ENCODE measurements at regions of chr10 and their contacts with region 1.

Region 1: DNA sequence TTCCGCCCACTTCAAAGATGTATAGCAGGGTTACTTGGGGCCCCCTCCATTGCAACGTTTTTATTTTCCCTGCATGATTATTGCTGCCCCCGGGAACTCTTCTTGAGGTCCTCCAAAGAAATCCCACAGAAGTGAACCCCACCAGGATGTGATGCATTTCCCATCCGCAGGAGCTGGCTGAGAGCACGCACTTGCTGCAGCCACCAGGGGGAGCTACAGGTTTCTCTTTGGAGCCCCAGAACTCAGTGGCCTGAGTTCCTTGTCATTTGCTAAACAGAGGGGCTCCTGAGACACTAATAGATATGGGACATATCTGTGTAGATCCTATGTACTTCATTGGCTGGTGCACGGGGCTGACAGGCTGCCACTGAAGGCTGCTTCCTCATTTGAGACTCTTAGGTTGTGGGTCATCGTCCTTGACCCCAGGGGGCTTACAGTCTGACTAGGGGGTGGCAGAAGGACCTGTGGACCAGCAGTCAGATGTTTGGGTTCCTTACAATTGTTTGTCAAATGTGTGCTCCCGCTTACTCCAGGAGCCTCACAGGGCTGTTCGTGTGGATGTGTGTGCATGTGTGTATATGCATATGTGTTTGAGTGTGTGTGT is 52.3 kb upstream of the ENO4 start:
- DNase-seq: peak; percentile 36 to 72 (median 64)
- ATAC-seq: no peak
- H3K4me3 ChIP-seq: no peak overlapping the region
- H3K4me3 Mint-ChIP-seq: no peak overlapping the region
- H3K27ac ChIP-seq: no peak overlapping the region
- H3K27ac Mint-ChIP-seq: no peak overlapping the region
- H3K4me1 ChIP-seq: no peaks in the 10 kb centered on the region
- H3K4me1 Mint-ChIP-seq: no peaks in the 10 kb centered on the region
- H3K27me3 ChIP-seq: no peaks in the 10 kb centered on the region
- H3K27me3 Mint-ChIP-seq: peaks cover 27% of the 10 kb centered on the region
- CTCF ChIP-seq: peak; percentile 74

Region 2: DNA sequence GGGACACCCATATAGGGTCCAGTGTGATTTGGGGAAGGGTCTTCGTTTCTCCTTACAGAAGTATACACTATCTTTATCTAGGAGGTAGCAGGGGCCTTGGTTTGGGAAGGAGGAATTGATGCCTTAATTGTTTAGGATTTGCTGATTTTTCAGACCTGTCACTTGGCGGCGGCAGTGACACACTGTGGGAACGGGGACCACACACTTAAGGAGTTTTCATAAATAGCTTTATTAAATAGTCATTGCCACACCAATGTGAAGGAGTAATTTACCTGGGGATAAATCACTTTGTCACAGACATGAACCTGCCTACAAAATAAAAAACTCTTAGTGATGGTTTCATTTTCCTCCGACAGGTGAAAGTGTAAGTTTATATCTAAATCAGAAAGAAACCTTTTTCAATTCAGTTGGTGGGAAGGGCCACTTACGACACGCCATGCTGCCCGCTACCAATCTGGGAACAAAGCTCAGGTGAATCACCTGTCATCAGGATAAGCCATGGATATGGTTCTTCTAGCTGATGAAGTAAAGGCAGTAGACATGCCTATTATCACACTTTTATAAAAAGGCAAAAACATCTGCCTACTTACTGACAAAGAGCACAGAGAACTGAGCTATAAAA is 40.0 kb after region 1 on chr10:
- CTCF ChIA-PET with region 1: no interaction called
- POLR2A ChIA-PET with region 1: no interaction called
- intact Hi-C with region 1: no loop called
- DNase-seq: no peak
- ATAC-seq: no peak
- H3K4me3 ChIP-seq: no peak overlapping the region
- H3K4me3 Mint-ChIP-seq: no peak overlapping the region
- H3K27ac ChIP-seq: no peak overlapping the region
- H3K27ac Mint-ChIP-seq: no peak overlapping the region
- H3K4me1 ChIP-seq: no peaks in the 10 kb centered on the region
- H3K4me1 Mint-ChIP-seq: no peaks in the 10 kb centered on the region
- H3K27me3 ChIP-seq: no peaks in the 10 kb centered on the region
- H3K27me3 Mint-ChIP-seq: no peaks in the 10 kb centered on the region
- CTCF ChIP-seq: no peak

Region 3: GRCh38 chr10:116888380-116889055 is 91.5 kb after region 1 on chr10:
- CTCF ChIA-PET with region 1: no interaction called
- POLR2A ChIA-PET with region 1: no interaction called
- intact Hi-C with region 1: no loop called
- DNase-seq: no peak
- ATAC-seq: no peak
- H3K4me3 ChIP-seq: no peak overlapping the region
- H3K4me3 Mint-ChIP-seq: no peak overlapping the region
- H3K27ac ChIP-seq: no peak overlapping the region
- H3K27ac Mint-ChIP-seq: no peak overlapping the region
- H3K4me1 ChIP-seq: no peaks in the 10 kb centered on the region
- H3K4me1 Mint-ChIP-seq: no peaks in the 10 kb centered on the region
- H3K27me3 ChIP-seq: no peaks in the 10 kb centered on the region
- H3K27me3 Mint-ChIP-seq: peaks cover 15% of the 10 kb centered on the region
- CTCF ChIP-seq: no peak

Region 4: DNA sequence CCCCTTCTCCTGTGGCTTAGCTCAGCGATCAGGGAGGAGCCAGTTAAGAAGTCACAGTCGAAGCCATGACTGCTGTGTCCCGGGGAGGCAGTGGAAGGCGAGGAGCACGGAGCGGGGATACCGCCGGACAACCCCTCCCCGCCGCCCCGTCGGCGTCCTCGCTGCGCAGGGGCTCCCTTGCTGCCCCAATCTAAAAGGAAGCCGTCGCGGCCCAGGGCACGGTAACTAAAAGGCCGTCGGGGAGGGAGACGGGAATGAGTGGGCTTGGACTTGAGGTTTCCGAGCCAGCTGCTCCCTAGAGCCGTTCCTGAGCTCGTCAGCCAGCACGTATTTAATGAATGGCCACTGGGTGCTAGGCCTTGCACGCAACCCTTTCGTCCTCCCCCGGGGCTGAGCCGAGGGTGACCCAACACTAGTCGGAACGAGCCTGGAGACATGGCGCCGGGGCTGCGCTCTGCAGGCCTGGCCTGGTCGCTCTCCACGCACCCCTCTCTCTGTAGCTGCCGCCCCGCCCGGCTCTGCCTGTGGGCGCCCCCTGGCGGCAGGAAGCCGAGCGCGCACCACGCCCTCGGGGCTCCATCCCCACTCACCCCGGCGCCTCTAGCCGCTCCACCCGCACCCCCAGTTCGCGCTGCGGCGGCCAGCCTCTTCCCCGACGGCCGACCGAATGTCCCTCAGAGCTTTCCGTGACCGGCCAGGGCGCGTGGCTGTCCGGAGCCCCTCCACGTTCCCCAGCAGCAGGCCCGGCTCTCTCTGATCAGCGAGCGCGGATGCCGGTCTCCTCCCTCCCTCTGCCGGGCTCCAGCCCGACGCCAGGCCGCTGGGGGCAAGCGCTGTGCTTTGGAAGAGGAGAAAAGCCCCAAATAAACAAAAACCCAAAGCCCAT is 371.0 kb after region 1 on chr10:
- CTCF ChIA-PET with region 1: interaction called, 15 read pairs
- POLR2A ChIA-PET with region 1: no interaction called
- intact Hi-C with region 1: no loop called
- DNase-seq: peak; percentile 34 to 77 (median 57)
- ATAC-seq: peak; percentile 92
- H3K4me3 ChIP-seq: no peak overlapping the region
- H3K4me3 Mint-ChIP-seq: peak overlapping the region; percentile 69
- H3K27ac ChIP-seq: no peak overlapping the region
- H3K27ac Mint-ChIP-seq: no peak overlapping the region
- H3K4me1 ChIP-seq: peaks cover 35% of the 10 kb centered on the region
- H3K4me1 Mint-ChIP-seq: peaks cover 33% of the 10 kb centered on the region
- H3K27me3 ChIP-seq: peaks cover 48 to 54% of the 10 kb centered on the region in 2 experiments
- H3K27me3 Mint-ChIP-seq: peaks cover 63% of the 10 kb centered on the region
- CTCF ChIP-seq: peak; percentile 73

Measured in CD8-positive, alpha-beta T cell (primary cell).